ENCODE measurements at regions of chr19 and their contacts with region 1.

Region 1: GRCh38 chr19:4678881-4679815 is 9.0 kb upstream of the MYDGF start:
- DNase-seq: peak; percentile 96 to 99 (median 96)
- ATAC-seq: peak; percentile 99
- H3K4me3 ChIP-seq: peak overlapping the region; percentile 16; the same call in 1 of the 2 replicates
- H3K27ac ChIP-seq: peak overlapping the region; percentile 63
- H3K4me1 ChIP-seq: peaks cover 4 to 50% of the 10 kb centered on the region in 2 experiments; a peak in 4 of 5 replicates
- H3K27me3 ChIP-seq: no peaks in the 10 kb centered on the region
- CTCF ChIP-seq: no peak
- EP300 ChIP-seq: no peak
- POLR2A ChIP-seq: no peak
- RAD21 ChIP-seq: no peak

Region 2: GRCh38 chr19:4647676-4648644 is 31.2 kb before region 1 on chr19:
- CTCF ChIA-PET with region 1: no interaction called
- POLR2A ChIA-PET with region 1: no interaction called
- in situ Hi-C with region 1: no loop called
- intact Hi-C with region 1: no loop called
- DNase-seq: no peak
- ATAC-seq: no peak; the same call in 2 of the 3 replicates
- H3K4me3 ChIP-seq: no peak overlapping the region
- H3K27ac ChIP-seq: no peak overlapping the region
- H3K4me1 ChIP-seq: peaks cover 0 to 25% of the 10 kb centered on the region in 2 experiments; a peak in 2 of 5 replicates
- H3K27me3 ChIP-seq: no peaks in the 10 kb centered on the region
- CTCF ChIP-seq: no peak
- EP300 ChIP-seq: no peak
- POLR2A ChIP-seq: no peak
- RAD21 ChIP-seq: no peak

Region 3: DNA sequence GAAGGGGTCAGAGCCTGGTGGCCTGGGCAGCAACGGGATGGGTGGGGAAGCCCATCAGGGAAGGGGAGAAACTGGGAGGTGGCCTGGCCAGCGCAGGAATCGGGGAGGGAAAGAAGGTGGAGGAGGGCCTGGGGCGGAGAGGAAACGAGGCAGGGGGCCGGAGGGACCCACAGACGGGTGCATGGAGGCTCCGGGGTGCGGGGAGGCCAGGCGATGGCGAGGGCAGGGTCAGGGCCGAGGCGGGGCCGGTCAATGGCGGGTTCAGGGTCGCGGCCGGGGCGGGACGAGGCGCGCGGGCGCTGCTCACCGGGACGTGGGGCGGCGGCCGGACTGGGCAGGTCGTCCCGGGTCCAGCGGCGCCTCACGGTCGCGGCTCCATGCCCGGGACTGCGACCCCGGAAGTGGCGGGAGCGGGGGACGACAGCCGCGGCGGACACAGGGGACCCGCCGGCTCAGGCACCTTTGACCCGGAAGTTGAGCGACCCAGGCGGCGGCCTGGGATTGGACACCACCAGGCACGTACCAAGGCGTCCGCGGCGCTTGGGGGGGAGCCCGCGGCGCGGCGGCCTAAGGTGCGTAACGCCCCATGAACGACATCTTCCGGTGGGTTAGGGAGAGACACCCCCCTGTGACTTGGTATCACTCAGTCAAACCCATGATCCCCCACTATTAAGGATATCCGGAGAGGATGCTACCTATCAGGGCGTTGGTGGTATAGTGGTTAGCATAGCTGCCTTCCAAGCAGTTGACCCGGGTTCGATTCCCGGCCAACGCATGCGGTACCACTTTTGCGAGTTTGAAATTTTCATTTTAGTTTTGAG is 44.4 kb after region 1 on chr19 and contains the start of gene DPP9:
- CTCF ChIA-PET with region 1: no interaction called
- POLR2A ChIA-PET with region 1: no interaction called
- in situ Hi-C with region 1: no loop called
- intact Hi-C with region 1: loop called (anchors 1 kb)
- DNase-seq: peak; percentile 97 to 100 (median 98)
- ATAC-seq: peak; percentile 97
- H3K4me3 ChIP-seq: peak within 1 kb of the TSS; percentile 100
- H3K27ac ChIP-seq: peak within 1 kb of the TSS; percentile 75
- H3K4me1 ChIP-seq: peaks cover 11 to 29% of the 10 kb centered on the region in 2 experiments
- H3K27me3 ChIP-seq: no peaks in the 10 kb centered on the region
- CTCF ChIP-seq: peak; percentile 29 to 52 (median 51); a peak in 4 of 6 replicates
- EP300 ChIP-seq: peak; percentile 83
- POLR2A ChIP-seq: no peak; the same call in 1 of the 2 replicates
- RAD21 ChIP-seq: no peak
- polyA plus RNA-seq, gene DPP9: 0.90 to 1.1 TPM